ENCODE measurements at regions of chr1 and their contacts with region 1.

Region 1: GRCh38 chr1:192477630-192478029 is 97.9 kb upstream of the RGS1 start:
- DNase-seq: no peak
- H3K4me3 ChIP-seq: no peak overlapping the region
- H3K27ac ChIP-seq: no peak overlapping the region
- H3K4me1 ChIP-seq: no peaks in the 10 kb centered on the region
- H3K27me3 ChIP-seq: no peaks in the 10 kb centered on the region
- CTCF ChIP-seq: peak in 2 of 3 donors; percentile 12 to 68
- EP300 ChIP-seq: no peak
- POLR2A ChIP-seq: no peak

Region 2: DNA sequence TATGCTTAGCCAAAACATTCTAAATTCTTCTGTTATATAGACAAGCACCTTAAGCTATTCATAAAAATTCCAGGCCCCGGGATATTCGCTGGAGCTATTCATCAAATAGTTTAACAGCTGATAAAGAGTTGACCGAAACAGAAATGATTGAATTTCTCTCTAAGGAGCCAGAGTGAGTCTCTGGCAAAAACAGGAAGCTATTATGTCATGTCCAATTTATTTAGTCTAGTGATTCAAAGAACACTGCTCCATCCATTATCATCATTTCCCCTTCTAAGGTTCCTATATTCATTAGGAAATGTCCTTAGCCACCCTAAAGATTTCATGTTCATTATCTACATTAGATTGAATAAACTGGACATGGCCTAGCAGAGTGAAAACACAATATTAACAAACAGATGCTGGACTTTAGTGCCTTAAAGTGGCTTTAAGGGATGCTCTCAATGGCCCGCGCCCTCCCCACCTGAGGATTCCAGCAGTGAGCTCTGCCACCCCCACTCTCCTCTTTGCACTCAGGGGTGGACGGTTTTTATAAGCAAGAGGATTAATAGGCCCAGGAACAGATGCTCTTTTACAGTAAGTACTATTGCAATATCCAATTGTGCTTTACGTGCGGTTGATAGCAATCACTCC is 24.2 kb before region 1 on chr1:
- intact Hi-C with region 1: no loop called
- DNase-seq: no peak
- H3K4me3 ChIP-seq: no peak overlapping the region
- H3K27ac ChIP-seq: no peak overlapping the region
- H3K4me1 ChIP-seq: no peaks in the 10 kb centered on the region
- H3K27me3 ChIP-seq: no peaks in the 10 kb centered on the region
- CTCF ChIP-seq: no peak
- EP300 ChIP-seq: no peak
- POLR2A ChIP-seq: no peak

Region 3: DNA sequence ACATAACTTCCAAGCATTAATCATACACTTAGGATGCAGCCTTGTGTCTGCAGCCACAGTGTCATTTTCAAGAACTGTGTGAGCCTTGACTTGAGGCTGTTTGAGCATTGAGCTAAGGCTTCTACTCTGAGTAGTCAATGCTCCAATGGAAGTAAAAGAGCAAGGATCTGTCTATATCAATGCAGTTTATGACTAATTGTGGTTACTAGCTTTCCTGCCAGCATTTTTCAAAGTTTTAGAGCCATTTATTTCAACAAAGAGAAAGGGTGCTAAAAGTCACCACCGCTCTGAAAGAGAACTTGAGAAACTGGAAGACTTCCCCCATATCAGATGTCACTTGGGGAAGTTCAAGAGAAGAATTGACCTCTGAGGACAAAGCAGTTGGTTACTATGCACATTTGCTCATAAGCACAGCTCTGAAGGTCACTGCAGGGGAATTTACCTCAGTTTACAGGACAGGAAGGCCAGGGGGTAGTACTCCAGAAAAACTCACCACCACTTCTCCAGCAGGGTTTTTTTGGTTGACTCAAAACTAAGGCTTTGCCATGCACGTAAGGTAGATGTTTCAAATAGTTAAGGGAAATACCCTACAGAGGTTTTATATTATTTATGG is 73.4 kb after region 1 on chr1:
- intact Hi-C with region 1: no loop called
- DNase-seq: no peak
- H3K4me3 ChIP-seq: no peak overlapping the region
- H3K27ac ChIP-seq: no peak overlapping the region
- H3K4me1 ChIP-seq: no peaks in the 10 kb centered on the region
- H3K27me3 ChIP-seq: no peaks in the 10 kb centered on the region
- CTCF ChIP-seq: no peak
- EP300 ChIP-seq: no peak
- POLR2A ChIP-seq: no peak

Region 4: GRCh38 chr1:192609110-192610079 is 131.8 kb after region 1 on chr1:
- intact Hi-C with region 1: loop called (anchors 5 to 10 kb)
- DNase-seq: peak in 3 of 5 donors; percentile 17 to 24 (median 18)
- H3K4me3 ChIP-seq: no peak overlapping the region
- H3K27ac ChIP-seq: no peak overlapping the region
- H3K4me1 ChIP-seq: no peaks in the 10 kb centered on the region
- H3K27me3 ChIP-seq: no peaks in the 10 kb centered on the region
- CTCF ChIP-seq: no peak
- EP300 ChIP-seq: no peak
- POLR2A ChIP-seq: no peak

Region 5: DNA sequence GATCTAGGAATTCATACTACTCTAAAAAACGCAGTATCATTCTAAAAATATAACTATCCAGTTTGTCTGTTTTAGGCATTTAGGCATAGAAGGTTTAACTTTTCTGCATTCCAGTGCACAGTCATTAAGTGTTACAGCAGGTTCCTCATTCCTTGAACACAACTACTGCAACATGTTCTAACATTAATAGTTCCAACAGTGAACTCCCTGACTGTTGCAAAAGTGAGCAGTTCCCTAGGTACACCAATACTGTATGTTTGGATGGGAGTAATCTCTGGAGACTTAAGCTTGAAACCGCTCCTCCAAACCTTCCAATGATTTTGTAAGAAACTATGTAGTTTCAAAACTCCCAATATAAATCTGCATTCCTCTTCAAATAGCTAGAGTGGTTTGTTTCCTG is 535.4 kb after region 1 on chr1:
- intact Hi-C with region 1: loop called in 3 of 4 experiments (anchors 5 to 10 kb)
- DNase-seq: no peak
- H3K4me3 ChIP-seq: no peak overlapping the region
- H3K27ac ChIP-seq: no peak overlapping the region
- H3K4me1 ChIP-seq: peaks cover 1% of the 10 kb centered on the region
- H3K27me3 ChIP-seq: no peaks in the 10 kb centered on the region
- CTCF ChIP-seq: no peak
- EP300 ChIP-seq: no peak
- POLR2A ChIP-seq: no peak

Region 6: GRCh38 chr1:193019442-193020026 is 541.9 kb after region 1 on chr1:
- intact Hi-C with region 1: loop called (anchors 5 to 10 kb)
- DNase-seq: no peak
- H3K4me3 ChIP-seq: no peak overlapping the region
- H3K27ac ChIP-seq: no peak overlapping the region
- H3K4me1 ChIP-seq: no peaks in the 10 kb centered on the region
- H3K27me3 ChIP-seq: no peaks in the 10 kb centered on the region
- CTCF ChIP-seq: peak; percentile 14 to 43 (median 40)
- EP300 ChIP-seq: no peak
- POLR2A ChIP-seq: no peak

Measured in ovary (tissue), 10 donors.